Keratinocyte (primary cell): ENCODE measurements at regions of chr7 and their contacts with region 1.

Region 1: GRCh38 chr7:36487756-36488336 is 98.2 kb downstream of the ANLN start:
- DNase-seq: no peak
- H3K4me3 ChIP-seq: no peak overlapping the region
- H3K27ac ChIP-seq: no peak overlapping the region
- H3K4me1 ChIP-seq: no peaks in the 10 kb centered on the region
- H3K27me3 ChIP-seq: no peaks in the 10 kb centered on the region
- CTCF ChIP-seq: peak; percentile 55 to 74 (median 61)

Region 2: GRCh38 chr7:36389371-36390198 is 98.3 kb before region 1 on chr7 and contains the start of gene ANLN:
- dilution Hi-C with region 1: no loop called
- DNase-seq: peak; percentile 80
- H3K4me3 ChIP-seq: peak within 1 kb of the TSS; percentile 87 to 98 (median 95)
- H3K27ac ChIP-seq: peak within 1 kb of the TSS; percentile 98
- H3K4me1 ChIP-seq: peaks cover 49% of the 10 kb centered on the region
- H3K27me3 ChIP-seq: no peaks in the 10 kb centered on the region
- CTCF ChIP-seq: no peak
- polyA plus RNA-seq, gene ANLN: 12.6 to 65.8 TPM (median 55.6 TPM) in 3 replicates

Region 3: GRCh38 chr7:36591636-36592035 is 103.8 kb after region 1 on chr7:
- dilution Hi-C with region 1: no loop called
- DNase-seq: no peak
- H3K4me3 ChIP-seq: no peak overlapping the region
- H3K27ac ChIP-seq: no peak overlapping the region
- H3K4me1 ChIP-seq: no peaks in the 10 kb centered on the region
- H3K27me3 ChIP-seq: peaks cover 3% of the 10 kb centered on the region
- CTCF ChIP-seq: no peak

Region 4: GRCh38 chr7:36670585-36671431 is 183.0 kb after region 1 on chr7:
- dilution Hi-C with region 1: loop called (anchors 25 kb)
- DNase-seq: no peak
- H3K4me3 ChIP-seq: no peak overlapping the region
- H3K27ac ChIP-seq: no peak overlapping the region
- H3K4me1 ChIP-seq: peaks cover 19% of the 10 kb centered on the region
- H3K27me3 ChIP-seq: no peaks in the 10 kb centered on the region
- CTCF ChIP-seq: peak; percentile 84 to 93 (median 89)

Region 5: DNA sequence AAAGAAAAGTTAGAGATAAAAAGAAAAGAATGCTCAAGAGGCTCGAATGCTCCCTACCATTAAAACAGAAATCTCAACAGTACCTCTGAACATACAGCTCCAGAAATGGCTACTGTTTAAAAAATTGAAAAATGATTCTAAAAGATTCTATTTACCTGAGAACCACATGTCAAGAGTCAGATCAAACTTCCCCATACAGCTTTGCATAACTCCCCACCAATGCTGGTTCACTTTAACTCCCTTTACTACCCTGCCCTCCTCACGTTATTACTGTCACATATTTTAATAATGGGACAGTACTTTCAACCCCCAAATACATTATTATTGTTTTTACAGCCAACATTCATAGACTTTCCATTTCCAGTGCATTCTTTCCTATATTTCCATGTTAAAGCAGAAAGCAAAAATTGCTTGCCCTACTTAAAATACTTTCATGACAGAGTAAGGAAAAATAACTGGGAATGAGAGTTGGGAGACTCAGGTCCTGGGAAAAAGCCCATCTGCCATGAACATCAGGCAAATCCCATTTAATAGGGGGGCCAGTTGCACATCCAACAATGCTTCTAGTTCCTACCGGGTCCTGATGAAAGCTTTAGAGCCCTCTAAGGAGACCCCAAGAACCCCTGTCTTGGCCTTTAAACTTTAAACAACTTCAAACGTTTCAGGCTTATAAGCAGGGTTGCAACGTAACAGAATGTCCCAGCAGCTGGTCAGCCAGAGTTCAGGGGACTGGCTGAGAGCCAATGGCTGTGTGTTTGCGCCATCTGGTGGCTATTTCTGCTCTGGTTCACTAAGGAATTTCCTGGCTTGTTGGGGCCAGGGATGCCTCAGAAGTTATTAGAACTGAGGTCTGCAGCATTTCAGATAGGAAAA is 713.4 kb after region 1 on chr7:
- dilution Hi-C with region 1: loop called (anchors 25 kb)
- DNase-seq: no peak
- H3K4me3 ChIP-seq: no peak overlapping the region
- H3K27ac ChIP-seq: no peak overlapping the region
- H3K4me1 ChIP-seq: no peaks in the 10 kb centered on the region
- H3K27me3 ChIP-seq: no peaks in the 10 kb centered on the region
- CTCF ChIP-seq: peak; percentile 83 to 91 (median 83)